ENCODE measurements at regions of chr5 and their contacts with region 1.

Region 1: DNA sequence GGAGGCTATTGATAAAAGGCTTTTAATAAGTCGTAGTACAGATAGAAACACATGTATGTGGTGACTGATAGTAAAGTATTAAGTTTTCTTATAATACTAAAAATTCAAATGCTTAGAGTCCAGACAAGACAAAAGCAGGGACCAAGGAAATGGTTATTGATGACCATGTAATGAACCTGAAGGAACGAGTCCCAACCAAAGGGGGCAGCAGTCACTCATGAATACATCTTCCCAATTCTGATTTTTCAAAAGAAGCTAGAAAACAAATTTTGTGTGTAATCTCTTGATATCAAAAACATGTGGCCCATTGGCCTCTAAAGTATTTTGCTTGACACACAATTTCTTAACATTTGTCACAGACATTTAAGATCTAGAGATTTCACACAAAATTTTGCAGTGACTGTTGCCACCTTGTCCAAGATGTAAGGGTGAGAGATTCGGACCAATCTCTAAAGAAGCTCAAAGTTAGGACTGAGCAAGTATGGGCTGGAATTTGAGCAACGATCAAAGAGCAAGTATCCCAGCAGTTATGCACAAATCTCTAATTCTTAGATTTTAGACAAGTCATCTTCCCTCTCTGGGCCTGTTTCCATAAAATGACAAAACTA is 66.8 kb downstream of the ARL15 start:
- DNase-seq: peak; percentile 49
- H3K4me3 ChIP-seq: no peak overlapping the region
- H3K27ac ChIP-seq: no peak overlapping the region
- H3K4me1 ChIP-seq: no peaks in the 10 kb centered on the region
- H3K27me3 ChIP-seq: no peaks in the 10 kb centered on the region
- CTCF ChIP-seq: peak; percentile 88
- EP300 ChIP-seq: no peak
- RAD21 ChIP-seq: peak; percentile 86

Region 2: DNA sequence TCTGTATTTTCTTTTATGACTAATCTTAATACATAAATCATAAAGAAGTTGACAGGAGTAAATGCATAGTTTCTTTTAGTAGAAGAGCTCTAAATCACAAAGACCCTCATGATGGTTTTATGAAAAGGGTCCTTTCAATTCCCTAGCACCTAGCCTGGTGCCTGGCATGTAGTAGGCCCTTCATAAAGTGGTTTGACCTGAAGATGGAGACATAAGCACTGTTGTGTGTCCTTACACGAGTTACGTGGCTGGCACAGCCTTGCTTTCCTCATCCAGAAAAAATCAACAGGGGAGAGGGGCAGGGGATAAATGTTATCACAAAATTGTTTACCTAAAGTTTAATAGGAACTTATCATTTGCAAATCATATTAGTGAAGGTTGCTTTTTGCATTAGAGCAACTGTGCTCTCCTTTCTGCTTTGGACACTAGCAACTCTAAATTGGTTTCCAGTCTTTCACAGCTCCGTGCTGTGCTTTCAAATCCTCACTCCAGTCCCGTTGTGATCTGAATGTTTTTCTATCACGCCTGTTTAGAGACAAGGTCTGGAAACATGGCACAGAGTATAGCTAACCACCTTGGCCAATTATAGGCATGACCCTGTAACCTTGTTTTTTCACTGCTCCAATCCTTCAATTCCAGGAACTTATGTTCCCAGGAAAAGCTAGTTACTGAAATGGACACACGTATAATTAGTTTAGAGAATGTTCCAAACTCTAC is 11.1 kb after region 1 on chr5:
- CTCF ChIA-PET with region 1: interaction called, 11 read pairs
- POLR2A ChIA-PET with region 1: no interaction called
- DNase-seq: no peak
- H3K4me3 ChIP-seq: no peak overlapping the region
- H3K27ac ChIP-seq: no peak overlapping the region
- H3K4me1 ChIP-seq: peaks cover 0 to 2% of the 10 kb centered on the region in 2 experiments; a peak in 1 of 4 replicates
- H3K27me3 ChIP-seq: no peaks in the 10 kb centered on the region
- CTCF ChIP-seq: peak; percentile 29; the same call in 1 of the 2 replicates
- EP300 ChIP-seq: no peak
- RAD21 ChIP-seq: peak; percentile 39

Region 3: GRCh38 chr5:54310433-54311175 is 67.0 kb after region 1 on chr5 and contains the start of gene ARL15:
- CTCF ChIA-PET with region 1: interaction called, 12 read pairs
- POLR2A ChIA-PET with region 1: no interaction called
- DNase-seq: peak; percentile 97
- H3K4me3 ChIP-seq: peak within 1 kb of the TSS; percentile 65 to 98
- H3K27ac ChIP-seq: peak within 1 kb of the TSS; percentile 80 to 87
- H3K4me1 ChIP-seq: peaks cover 3 to 12% of the 10 kb centered on the region in 2 experiments; a peak in 3 of 4 replicates
- H3K27me3 ChIP-seq: no peaks in the 10 kb centered on the region
- CTCF ChIP-seq: no peak
- EP300 ChIP-seq: peak in 1 of 2 experiments; percentile 59; a peak in 1 of 4 replicates
- RAD21 ChIP-seq: no peak
- polyA plus RNA-seq, gene ARL15: 6.4 and 11.0 TPM in 2 replicates

Region 4: DNA sequence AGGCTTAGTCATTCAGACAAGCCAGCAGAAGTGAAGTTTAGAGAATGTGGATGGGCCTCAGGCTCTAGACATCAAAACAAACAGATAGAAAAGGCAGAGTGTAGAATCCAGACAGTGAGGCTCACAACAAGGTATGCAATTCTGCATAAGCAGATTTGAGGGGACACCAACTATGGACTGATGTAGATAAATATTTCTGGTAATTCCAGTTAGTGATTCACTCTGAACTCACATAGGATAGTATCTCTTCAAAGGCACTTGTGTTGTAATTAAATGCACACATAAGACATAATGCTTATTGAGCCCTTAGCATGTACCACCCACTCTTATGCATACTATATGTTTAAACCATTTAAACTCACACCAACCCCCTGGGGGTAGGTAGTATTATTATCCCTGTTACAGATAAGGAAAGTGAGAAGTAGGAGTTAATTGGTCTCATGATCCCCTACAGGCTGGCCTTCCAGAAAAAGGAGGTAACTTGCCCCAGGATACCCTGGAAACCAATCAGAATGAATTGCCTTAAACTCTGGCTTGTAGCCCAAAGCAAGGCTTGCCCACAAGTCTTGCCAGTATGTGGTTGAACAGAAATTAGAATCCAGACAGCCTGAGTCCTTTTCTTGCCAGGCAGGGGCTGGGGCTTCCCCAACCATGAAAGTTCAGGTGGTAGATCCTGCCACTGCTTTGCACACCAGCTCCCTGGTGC is 172.5 kb after region 1 on chr5:
- CTCF ChIA-PET with region 1: interaction called, 26 read pairs
- POLR2A ChIA-PET with region 1: no interaction called
- DNase-seq: no peak
- H3K4me3 ChIP-seq: no peak overlapping the region
- H3K27ac ChIP-seq: no peak overlapping the region
- H3K4me1 ChIP-seq: 0 out of 4 replicates have a peak, but pooled peaks cover 0 to 3% of the 10 kb centered on the region in 2 experiments
- H3K27me3 ChIP-seq: no peaks in the 10 kb centered on the region
- CTCF ChIP-seq: no peak
- EP300 ChIP-seq: no peak
- RAD21 ChIP-seq: no peak

Region 5: DNA sequence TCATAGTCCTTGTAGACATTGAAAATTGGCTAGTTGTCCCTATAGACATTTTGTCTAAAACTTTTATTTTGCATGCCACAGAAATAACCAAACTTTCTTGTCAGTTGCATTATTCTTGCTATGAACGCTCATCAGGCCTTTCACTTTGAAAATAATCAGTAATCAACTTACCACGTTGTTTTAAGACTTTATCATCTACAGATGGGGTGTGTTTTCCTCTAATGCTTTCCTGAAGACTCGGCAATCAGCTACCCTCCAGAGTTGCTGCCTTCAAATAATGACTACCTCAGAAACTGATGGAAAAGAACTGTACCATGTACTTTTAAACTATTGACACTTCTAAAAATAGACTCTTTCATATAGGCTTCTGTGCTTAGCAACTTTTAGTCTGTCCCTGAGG is 178.4 kb after region 1 on chr5:
- CTCF ChIA-PET with region 1: interaction called, 27 read pairs
- POLR2A ChIA-PET with region 1: no interaction called
- DNase-seq: no peak
- H3K4me3 ChIP-seq: no peak overlapping the region
- H3K27ac ChIP-seq: no peak overlapping the region
- H3K4me1 ChIP-seq: no peaks in the 10 kb centered on the region
- H3K27me3 ChIP-seq: no peaks in the 10 kb centered on the region
- CTCF ChIP-seq: no peak
- EP300 ChIP-seq: no peak
- RAD21 ChIP-seq: no peak